H1 (cell line): ENCODE measurements at regions of chr2 and their contacts with region 1.

Region 1: GRCh38 chr2:113198790-113199612 is 25.2 kb downstream of the PSD4 start:
- DNase-seq: peak; percentile 54 to 95
- H3K4me3 ChIP-seq: peak overlapping the region; percentile 57 to 73 (median 66)
- H3K27ac ChIP-seq: no peak overlapping the region
- H3K4me1 ChIP-seq: no peaks in the 10 kb centered on the region; a peak in 3 of 7 replicates
- H3K27me3 ChIP-seq: peaks cover 0 to 2% (median 0%) of the 10 kb centered on the region in 4 experiments; a peak in 1 of 7 replicates
- CTCF ChIP-seq: peak; percentile 86 to 96 (median 89)
- EP300 ChIP-seq: 0 out of 3 replicates have a peak, but pooled peaks of 1 of the 2 experiments have one; percentile 1
- POLR2A ChIP-seq: 0 out of 3 replicates have a peak, but pooled peaks of 1 of the 2 experiments have one; percentile 15
- RAD21 ChIP-seq: peak; percentile 57 to 71

Region 2: GRCh38 chr2:113050921-113051895 is 147.8 kb before region 1 on chr2:
- CTCF ChIA-PET with region 1: no interaction called
- POLR2A ChIA-PET with region 1: no interaction called
- DNase-seq: no peak
- H3K4me3 ChIP-seq: no peak overlapping the region
- H3K27ac ChIP-seq: no peak overlapping the region
- H3K4me1 ChIP-seq: no peaks in the 10 kb centered on the region
- H3K27me3 ChIP-seq: no peaks in the 10 kb centered on the region
- CTCF ChIP-seq: no peak
- EP300 ChIP-seq: no peak
- POLR2A ChIP-seq: no peak
- RAD21 ChIP-seq: no peak

Region 3: GRCh38 chr2:113167115-113167932 is 31.7 kb before region 1 on chr2:
- CTCF ChIA-PET with region 1: interaction called, 31 read pairs
- POLR2A ChIA-PET with region 1: interaction called, 4 read pairs
- DNase-seq: peak in 1 of 2 experiments; percentile 31
- H3K4me3 ChIP-seq: no peak overlapping the region
- H3K27ac ChIP-seq: no peak overlapping the region
- H3K4me1 ChIP-seq: peaks cover 0 to 4% (median 0%) of the 10 kb centered on the region in 4 experiments; a peak in 2 of 7 replicates
- H3K27me3 ChIP-seq: peaks cover 0 to 4% (median 3%) of the 10 kb centered on the region in 4 experiments; a peak in 1 of 7 replicates
- CTCF ChIP-seq: no peak
- EP300 ChIP-seq: no peak
- POLR2A ChIP-seq: no peak
- RAD21 ChIP-seq: no peak

Region 4: DNA sequence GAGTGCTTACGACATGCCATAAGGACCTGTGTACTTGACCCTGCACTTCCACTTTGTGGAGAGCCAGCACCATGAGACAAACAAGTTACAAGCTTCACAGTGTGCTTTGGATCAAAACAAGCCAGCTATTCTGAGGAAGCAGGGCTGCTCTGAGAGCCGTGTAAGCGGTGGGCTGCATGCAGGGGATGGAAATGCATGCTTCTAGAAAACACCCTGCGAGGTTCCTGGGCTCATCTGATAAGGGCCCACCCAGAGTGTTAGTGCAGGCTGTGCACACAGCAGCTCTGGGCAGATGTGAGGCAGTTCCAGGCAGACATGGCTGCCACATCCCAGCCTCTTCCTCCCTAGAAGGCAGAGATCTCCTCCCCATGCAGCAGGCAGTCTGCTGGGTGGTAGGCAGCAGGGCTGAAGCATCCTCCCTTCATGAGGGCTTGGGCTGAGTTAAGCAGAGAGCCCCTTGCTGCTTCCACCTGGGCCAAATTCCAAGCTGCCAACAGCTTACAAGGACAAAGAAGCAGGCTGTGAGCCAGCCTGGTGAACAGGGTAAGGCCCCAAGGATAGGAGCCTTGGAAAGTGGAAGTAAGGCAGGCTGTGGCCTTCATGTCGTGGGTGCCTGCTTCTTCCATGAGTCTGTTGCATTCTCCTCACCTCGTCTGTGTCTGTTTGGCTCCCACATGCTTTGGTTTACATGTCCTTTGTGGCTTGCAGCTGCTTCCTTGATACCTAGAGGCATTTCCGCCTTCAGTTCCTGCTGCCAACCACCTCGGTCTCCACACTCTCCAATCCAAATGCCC is 17.5 kb before region 1 on chr2:
- CTCF ChIA-PET with region 1: interaction called, 19 read pairs
- POLR2A ChIA-PET with region 1: no interaction called
- DNase-seq: no peak
- H3K4me3 ChIP-seq: no peak overlapping the region
- H3K27ac ChIP-seq: no peak overlapping the region
- H3K4me1 ChIP-seq: peaks cover 0 to 6% (median 2%) of the 10 kb centered on the region in 4 experiments; a peak in 3 of 7 replicates
- H3K27me3 ChIP-seq: no peaks in the 10 kb centered on the region
- CTCF ChIP-seq: no peak
- EP300 ChIP-seq: no peak
- POLR2A ChIP-seq: no peak
- RAD21 ChIP-seq: no peak

Region 5: GRCh38 chr2:113219889-113220641 is 21.1 kb after region 1 on chr2:
- CTCF ChIA-PET with region 1: interaction called, 24 read pairs
- POLR2A ChIA-PET with region 1: no interaction called
- DNase-seq: no peak
- H3K4me3 ChIP-seq: no peak overlapping the region
- H3K27ac ChIP-seq: no peak overlapping the region
- H3K4me1 ChIP-seq: peaks cover 0 to 5% (median 4%) of the 10 kb centered on the region in 4 experiments; a peak in 4 of 7 replicates
- H3K27me3 ChIP-seq: no peaks in the 10 kb centered on the region
- CTCF ChIP-seq: no peak
- EP300 ChIP-seq: no peak
- POLR2A ChIP-seq: no peak
- RAD21 ChIP-seq: no peak

Region 6: DNA sequence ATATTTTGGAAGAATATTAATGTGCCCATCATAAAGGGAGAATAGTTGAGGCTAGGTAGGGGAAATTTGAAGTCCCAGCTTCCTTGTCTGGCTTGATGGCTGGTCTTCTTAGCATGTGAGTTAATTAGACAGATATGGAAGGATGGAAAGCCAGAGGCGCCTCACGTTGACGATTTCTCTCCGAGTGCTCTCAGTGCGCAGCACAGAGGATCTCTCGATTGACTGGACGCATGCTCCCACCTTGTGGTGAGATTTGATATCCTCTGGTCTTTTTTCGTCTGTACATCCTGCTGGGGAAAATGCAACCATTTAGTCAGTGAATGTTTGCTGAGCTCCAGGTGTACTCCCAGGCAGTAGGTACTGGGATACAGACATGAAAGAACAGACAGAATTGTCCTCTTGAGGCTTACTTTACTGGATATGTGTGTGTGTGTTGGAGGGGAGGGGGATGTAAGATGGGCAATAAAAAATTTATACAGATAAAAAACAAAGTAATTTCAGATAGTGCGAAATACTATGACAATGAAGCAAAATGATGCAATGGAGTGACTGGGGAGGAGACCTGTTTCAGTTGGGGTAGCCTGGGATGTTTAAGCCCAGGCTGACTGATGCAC is 171.6 kb after region 1 on chr2:
- CTCF ChIA-PET with region 1: interaction called, 74 read pairs
- POLR2A ChIA-PET with region 1: interaction called, 3 read pairs
- DNase-seq: peak; percentile 9 to 66
- H3K4me3 ChIP-seq: no peak overlapping the region
- H3K27ac ChIP-seq: no peak overlapping the region
- H3K4me1 ChIP-seq: no peaks in the 10 kb centered on the region
- H3K27me3 ChIP-seq: no peaks in the 10 kb centered on the region
- CTCF ChIP-seq: peak; percentile 41 to 81 (median 75)
- EP300 ChIP-seq: no peak
- POLR2A ChIP-seq: no peak
- RAD21 ChIP-seq: peak; percentile 87 to 88